ENCODE measurements at regions of chr5 and their contacts with region 1.

Region 1: DNA sequence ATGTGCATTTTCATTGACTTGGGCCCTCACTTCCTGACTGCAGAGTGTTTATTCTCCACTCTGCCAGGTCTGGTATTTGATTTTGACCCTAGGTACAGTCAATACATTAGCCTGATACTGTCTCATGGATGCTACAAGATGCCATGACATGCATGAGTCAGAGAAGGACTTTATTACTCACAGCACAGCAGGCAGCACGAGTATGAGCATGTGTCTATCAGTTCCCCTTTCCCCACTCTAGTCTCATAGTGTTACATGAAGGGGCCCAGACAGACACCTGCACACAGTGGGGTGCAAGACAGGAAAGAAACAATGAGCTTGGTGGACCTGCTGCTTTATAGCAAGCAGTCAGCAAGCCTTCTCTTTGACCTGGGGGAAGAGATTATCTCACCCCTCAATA is 19.6 kb downstream of the ITGA2 start:
- DNase-seq: peak; percentile 74
- H3K4me3 Mint-ChIP-seq: peak overlapping the region; percentile 34
- H3K27ac Mint-ChIP-seq: peak overlapping the region; percentile 85
- H3K4me1 Mint-ChIP-seq: peaks cover 65% of the 10 kb centered on the region
- H3K27me3 Mint-ChIP-seq: peaks cover 4% of the 10 kb centered on the region

Region 2: GRCh38 chr5:52709171-52709925 is 299.4 kb before region 1 on chr5:
- intact Hi-C with region 1: loop called (anchors 2 kb)
- DNase-seq: peak; percentile 72
- H3K4me3 Mint-ChIP-seq: peak overlapping the region; percentile 20
- H3K27ac Mint-ChIP-seq: peak overlapping the region; percentile 25
- H3K4me1 Mint-ChIP-seq: peaks cover 50% of the 10 kb centered on the region
- H3K27me3 Mint-ChIP-seq: peaks cover 2% of the 10 kb centered on the region

Region 3: DNA sequence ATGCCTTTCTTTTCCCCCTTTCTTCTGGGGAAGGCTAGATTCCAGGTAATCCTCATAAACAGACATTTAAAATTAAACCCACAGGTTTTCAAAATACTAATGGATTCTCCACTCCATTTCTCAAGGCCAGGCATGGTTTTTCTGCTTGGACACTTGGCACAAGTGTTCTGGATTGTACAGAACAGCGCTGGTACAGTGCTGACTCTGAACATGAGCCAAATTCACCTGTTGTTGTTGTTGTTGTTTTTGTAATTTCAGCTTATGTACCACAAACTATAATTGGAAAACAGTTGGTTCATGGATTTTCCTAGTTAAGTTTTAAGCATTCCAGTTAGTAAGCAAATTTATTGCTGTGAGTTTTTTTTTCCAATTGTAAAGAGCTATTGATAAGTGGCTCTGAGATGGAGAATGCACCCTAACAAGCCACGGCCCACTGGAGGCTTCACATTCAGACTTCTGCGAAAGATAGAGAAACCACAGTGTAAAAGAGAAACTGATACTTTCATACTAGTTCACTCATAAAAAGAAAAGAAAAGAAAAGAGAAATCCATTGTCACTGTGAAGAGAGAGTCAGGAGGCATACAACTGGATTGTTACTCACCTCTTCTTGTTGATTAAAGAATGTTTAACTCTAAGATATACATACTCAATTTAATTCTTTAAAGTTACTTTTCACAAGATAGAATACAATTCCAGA is 237.3 kb before region 1 on chr5:
- intact Hi-C with region 1: loop called (anchors 10 kb)
- DNase-seq: peak; percentile 85
- H3K4me3 Mint-ChIP-seq: peak overlapping the region; percentile 62
- H3K27ac Mint-ChIP-seq: peak overlapping the region; percentile 71
- H3K4me1 Mint-ChIP-seq: peaks cover 54% of the 10 kb centered on the region
- H3K27me3 Mint-ChIP-seq: no peaks in the 10 kb centered on the region

Region 4: DNA sequence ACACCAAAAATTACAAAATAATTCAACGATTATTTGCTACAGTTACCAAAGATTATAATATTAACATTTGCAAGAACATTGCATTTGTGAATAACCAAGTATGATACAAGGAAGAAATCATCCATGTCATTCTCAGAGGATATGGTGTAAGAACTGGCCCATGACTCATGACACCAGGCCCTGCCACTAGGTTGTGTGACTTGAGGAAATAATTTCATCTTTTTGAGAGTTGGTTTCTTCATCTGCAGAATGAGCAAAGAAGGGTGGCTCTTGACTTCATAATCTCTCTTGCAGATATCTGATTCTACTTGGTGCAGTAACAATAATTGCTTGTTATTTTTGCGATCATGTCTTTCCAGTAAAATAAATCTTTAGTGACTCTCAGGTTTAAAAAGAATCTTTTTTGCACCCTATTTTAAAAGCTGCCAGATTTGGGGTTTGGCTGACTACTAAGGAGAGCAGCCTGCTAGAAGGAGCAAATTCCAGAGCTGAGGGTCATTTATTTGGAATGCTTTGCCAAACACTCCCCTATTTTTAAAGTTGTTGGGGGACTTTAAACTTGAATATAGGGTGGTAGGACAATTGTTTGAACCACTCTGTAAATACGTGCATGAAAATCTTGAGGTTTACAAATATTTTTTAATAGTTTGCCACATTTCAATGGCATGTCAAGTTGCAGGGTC is 197.5 kb before region 1 on chr5:
- intact Hi-C with region 1: no loop called
- DNase-seq: no peak
- H3K4me3 Mint-ChIP-seq: no peak overlapping the region
- H3K27ac Mint-ChIP-seq: no peak overlapping the region
- H3K4me1 Mint-ChIP-seq: peaks cover 5% of the 10 kb centered on the region
- H3K27me3 Mint-ChIP-seq: peaks cover 3% of the 10 kb centered on the region

Region 5: GRCh38 chr5:53023969-53024368 is 15.2 kb after region 1 on chr5:
- intact Hi-C with region 1: loop called (anchors 1 kb)
- DNase-seq: peak; percentile 54
- H3K4me3 Mint-ChIP-seq: no peak overlapping the region
- H3K27ac Mint-ChIP-seq: no peak overlapping the region
- H3K4me1 Mint-ChIP-seq: peaks cover 10% of the 10 kb centered on the region
- H3K27me3 Mint-ChIP-seq: no peaks in the 10 kb centered on the region

Region 6: GRCh38 chr5:53041071-53041692 is 32.4 kb after region 1 on chr5:
- intact Hi-C with region 1: loop called (anchors 1 kb)
- DNase-seq: peak; percentile 81
- H3K4me3 Mint-ChIP-seq: peak overlapping the region; percentile 76
- H3K27ac Mint-ChIP-seq: peak overlapping the region; percentile 82
- H3K4me1 Mint-ChIP-seq: peaks cover 65% of the 10 kb centered on the region
- H3K27me3 Mint-ChIP-seq: no peaks in the 10 kb centered on the region

Region 7: GRCh38 chr5:53089345-53089991 is 80.7 kb after region 1 on chr5:
- intact Hi-C with region 1: loop called (anchors 1 kb)
- DNase-seq: peak; percentile 77
- H3K4me3 Mint-ChIP-seq: peak overlapping the region; percentile 45
- H3K27ac Mint-ChIP-seq: peak overlapping the region; percentile 42
- H3K4me1 Mint-ChIP-seq: peaks cover 38% of the 10 kb centered on the region
- H3K27me3 Mint-ChIP-seq: no peaks in the 10 kb centered on the region